Calu3 (cell line): ENCODE measurements at regions of chr1 and their contacts with region 1.

Region 1: DNA sequence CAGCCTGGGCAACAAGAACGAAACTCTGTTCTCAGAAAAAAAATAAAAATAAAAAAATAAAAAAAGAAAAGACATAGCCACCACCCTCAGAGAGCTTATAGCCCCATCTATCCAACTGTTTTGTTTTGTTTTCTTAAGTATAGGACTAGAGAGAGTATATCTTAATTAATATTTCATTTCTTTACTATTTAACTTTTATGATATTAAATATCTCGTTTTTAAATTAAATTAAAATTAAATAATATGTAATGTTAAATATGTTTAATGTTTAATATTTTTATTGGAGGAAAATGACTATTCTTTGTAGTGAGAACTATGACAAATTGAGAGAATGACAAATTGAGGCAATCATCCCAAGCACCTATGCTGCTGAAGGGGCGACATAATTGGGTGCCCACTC is 33.1 kb upstream of the YTHDF2 start:
- DNase-seq: no peak
- H3K4me3 Mint-ChIP-seq: no peak overlapping the region
- H3K27ac Mint-ChIP-seq: no peak overlapping the region
- H3K4me1 Mint-ChIP-seq: no peaks in the 10 kb centered on the region
- H3K27me3 Mint-ChIP-seq: no peaks in the 10 kb centered on the region
- CTCF ChIP-seq: no peak

Region 2: DNA sequence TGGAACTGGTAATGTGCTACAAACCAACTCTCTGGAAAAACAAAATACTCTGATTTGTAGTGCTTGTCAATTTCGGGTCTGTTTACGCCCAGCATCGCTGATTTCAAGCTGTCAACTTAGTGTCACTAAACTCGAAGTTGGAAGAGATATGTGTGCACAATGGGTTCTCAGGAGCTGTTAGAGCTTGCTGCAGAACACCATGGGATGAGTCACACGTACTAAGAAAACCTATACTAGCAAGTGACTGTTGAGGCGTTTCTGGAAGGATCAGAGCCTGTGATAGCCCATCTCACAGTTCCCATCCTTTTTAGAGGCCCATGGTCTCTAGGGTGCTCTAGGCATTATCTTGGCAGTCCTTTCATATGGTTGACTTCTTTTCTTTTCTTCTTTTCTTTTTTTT is 20.8 kb before region 1 on chr1:
- CTCF ChIA-PET with region 1: interaction called, 3 read pairs
- intact Hi-C with region 1: loop called (anchors 2 kb)
- DNase-seq: no peak
- H3K4me3 Mint-ChIP-seq: no peak overlapping the region
- H3K27ac Mint-ChIP-seq: no peak overlapping the region
- H3K4me1 Mint-ChIP-seq: no peaks in the 10 kb centered on the region
- H3K27me3 Mint-ChIP-seq: no peaks in the 10 kb centered on the region
- CTCF ChIP-seq: no peak